Gastrocnemius medialis (tissue), 4 donors: ENCODE measurements at regions of chrX and their contacts with region 1.

Region 1: DNA sequence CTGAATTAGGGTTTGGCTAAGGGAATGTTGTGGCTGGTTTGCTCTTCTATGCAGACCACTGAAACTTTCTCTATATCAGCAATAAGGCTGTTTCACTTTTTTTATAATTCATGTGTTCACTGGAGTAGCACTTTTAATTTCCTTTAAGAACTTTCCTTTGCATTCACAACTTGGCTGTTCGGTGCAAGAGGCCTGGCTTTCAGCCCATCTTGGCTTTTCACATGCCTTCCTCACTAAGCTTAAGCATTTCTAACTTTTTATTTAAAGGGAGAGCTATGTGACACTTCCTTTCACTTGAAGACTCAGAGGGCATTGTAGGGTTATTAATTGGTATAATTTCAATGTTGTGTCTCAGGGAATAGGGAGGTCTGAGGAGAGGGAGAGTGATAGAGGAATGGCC is 142.3 kb downstream of the SHROOM4 start:
- DNase-seq: no peak
- ATAC-seq: no peak
- H3K4me3 ChIP-seq: no peak overlapping the region
- H3K27ac ChIP-seq: no peak overlapping the region
- H3K4me1 ChIP-seq: no peaks in the 10 kb centered on the region
- H3K27me3 ChIP-seq: no peaks in the 10 kb centered on the region
- CTCF ChIP-seq: no peak
- POLR2A ChIP-seq: no peak

Region 2: DNA sequence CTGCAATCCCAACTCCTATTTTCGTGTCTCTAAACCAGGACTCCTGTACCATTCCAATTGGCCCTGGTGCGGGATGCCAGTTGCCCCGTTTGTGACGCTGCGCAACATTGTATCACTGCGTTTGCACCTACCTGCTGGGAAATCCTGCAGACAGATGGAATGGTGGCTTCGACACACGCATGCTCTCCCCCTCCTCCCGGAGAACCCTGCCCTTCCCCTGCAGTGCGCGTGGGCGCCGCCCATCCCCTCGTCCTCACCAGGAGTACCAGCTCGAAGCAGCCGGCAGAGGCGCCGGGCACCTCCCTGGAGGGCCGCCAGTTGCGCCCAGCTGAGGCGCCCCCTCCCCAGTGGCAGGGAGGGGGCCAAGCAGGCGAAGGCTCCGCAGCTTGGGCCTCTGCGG is 202.5 kb before region 1 on chrX:
- in situ Hi-C with region 1: no loop called
- intact Hi-C with region 1: loop called (anchors 10 kb)
- DNase-seq: no peak
- ATAC-seq: no peak
- H3K4me3 ChIP-seq: no peak overlapping the region
- H3K27ac ChIP-seq: no peak overlapping the region
- H3K4me1 ChIP-seq: no peaks in the 10 kb centered on the region
- H3K27me3 ChIP-seq: peaks cover 18 to 91% (median 66%) of the 10 kb centered on the region in 3 donors
- CTCF ChIP-seq: no peak
- POLR2A ChIP-seq: no peak

Region 3: DNA sequence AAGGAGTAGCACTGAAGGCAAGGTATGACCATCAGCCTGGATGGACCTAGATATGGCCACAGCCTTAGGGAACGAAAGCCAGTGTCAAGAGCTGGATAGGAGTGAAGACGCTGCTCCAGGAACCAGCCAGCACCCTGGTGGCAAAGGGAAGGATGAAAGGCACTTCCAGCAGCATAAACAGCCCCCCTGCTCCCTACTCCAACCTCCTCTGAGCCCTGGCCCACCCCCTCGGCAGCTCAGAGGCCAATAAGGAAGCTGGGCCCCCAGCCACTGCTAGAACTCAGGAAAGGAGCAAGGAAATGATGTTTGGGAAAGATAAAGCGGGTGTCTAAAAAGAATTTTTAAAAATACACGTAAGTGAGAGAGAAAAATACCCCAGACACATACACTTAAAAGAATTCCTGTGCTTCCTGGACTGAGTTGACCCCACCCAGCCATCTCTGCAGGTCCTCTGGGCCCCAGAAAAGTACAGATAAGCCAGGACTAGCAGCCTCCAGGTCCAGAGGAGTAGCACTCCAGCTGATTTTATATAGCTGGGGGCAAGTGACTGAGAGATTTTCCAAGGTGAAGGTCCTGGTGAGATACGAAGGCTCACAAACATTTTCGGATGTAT is 28.0 kb before region 1 on chrX:
- in situ Hi-C with region 1: no loop called
- intact Hi-C with region 1: no loop called
- DNase-seq: no peak
- ATAC-seq: peak; percentile 21 to 30
- H3K4me3 ChIP-seq: peak overlapping the region in 3 of 4 donors; percentile 13 to 46 (median 28)
- H3K27ac ChIP-seq: peak overlapping the region in 3 of 4 donors; percentile 38 to 45 (median 45)
- H3K4me1 ChIP-seq: no peaks in the 10 kb centered on the region
- H3K27me3 ChIP-seq: no peaks in the 10 kb centered on the region
- CTCF ChIP-seq: no peak
- POLR2A ChIP-seq: no peak